ENCODE measurements at regions of chr3 and their contacts with region 1.

Region 1: DNA sequence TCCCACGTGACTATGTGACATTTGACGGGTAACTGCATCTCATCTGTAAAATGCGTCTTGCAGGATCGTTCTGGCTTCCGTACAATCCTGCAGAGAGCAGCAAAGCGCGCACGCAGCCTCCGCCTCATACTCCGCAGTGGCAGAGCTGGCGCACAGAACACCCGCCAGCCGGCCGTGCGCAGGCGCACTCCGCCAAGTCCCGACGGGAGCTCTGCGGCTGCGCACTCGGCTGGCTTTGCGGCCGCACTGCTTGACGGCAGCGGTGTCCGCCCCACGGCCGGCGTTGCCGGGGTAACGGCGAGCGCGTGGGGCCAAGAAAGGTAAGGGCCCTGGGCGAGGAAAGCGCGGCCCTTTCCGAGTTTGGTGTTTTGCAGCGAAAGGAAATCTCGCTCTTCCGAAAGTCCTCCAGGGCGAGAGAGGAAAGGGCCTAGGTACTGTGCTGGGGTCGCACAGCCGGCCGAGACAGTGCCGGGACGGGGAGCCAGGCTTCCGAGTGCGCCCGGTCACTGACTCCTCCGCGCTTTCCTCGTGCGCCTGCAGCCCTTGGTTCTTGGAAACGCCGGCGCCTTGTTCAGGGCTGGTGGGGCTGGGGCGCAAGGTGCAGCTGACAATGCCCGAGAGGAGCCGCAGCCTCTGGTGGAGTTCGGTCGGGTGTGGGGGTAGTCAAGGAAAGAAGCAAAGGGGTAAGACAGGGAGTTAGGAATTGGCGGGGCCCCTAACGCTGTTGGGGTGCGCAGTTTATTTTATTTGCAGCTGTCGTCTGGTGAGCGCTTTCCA is at the start of gene TSEN2:
- DNase-seq: peak; percentile 99
- H3K4me3 Mint-ChIP-seq: peak within 1 kb of the TSS; percentile 94
- H3K27ac Mint-ChIP-seq: peak within 1 kb of the TSS; percentile 97
- H3K4me1 Mint-ChIP-seq: peaks cover 25% of the 10 kb centered on the region
- H3K27me3 Mint-ChIP-seq: no peaks in the 10 kb centered on the region
- total RNA-seq, gene TSEN2: 30.5 and 39.3 TPM in 2 replicates

Region 2: DNA sequence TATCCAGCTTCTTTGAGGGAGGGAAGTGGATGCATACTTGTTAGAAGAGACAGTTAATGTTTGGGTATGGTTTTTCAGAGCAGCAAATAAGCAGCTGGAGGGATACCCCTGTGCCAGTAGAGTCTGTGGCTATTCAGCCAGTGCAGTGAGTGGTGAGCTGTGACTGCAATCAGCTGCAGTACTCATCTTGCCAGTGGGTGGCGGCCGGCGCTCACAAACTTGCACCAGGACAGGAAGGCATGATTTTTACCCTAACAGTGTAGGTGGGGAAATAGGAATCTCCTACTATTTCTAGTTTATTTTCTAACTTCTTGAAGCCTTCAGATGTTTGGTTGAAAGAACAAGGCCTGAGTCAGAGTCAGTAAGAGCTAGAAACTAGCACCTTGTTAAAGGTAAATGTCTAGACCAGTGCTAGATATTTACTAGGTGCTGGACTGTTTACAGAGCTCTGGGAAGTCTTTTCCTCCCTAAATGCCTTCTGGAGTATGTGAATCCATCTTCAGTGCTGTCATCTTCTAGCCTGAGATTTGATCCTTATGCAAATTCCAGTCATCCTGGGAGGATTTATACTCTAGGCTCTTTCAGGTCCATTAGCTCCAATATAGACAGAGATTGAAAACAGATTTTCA is 349.2 kb before region 1 on chr3:
- intact Hi-C with region 1: loop called (anchors 1 kb)
- DNase-seq: peak; percentile 88
- H3K4me3 Mint-ChIP-seq: no peak overlapping the region
- H3K27ac Mint-ChIP-seq: no peak overlapping the region
- H3K4me1 Mint-ChIP-seq: peaks cover 4% of the 10 kb centered on the region
- H3K27me3 Mint-ChIP-seq: peaks cover 21% of the 10 kb centered on the region

Region 3: GRCh38 chr3:12287727-12288191 is 196.6 kb before region 1 on chr3:
- intact Hi-C with region 1: loop called (anchors 5 kb)
- DNase-seq: no peak
- H3K4me3 Mint-ChIP-seq: peak overlapping the region; percentile 72
- H3K27ac Mint-ChIP-seq: no peak overlapping the region
- H3K4me1 Mint-ChIP-seq: peaks cover 3% of the 10 kb centered on the region
- H3K27me3 Mint-ChIP-seq: peaks cover 66% of the 10 kb centered on the region

Region 4: GRCh38 chr3:12556671-12557472 is 72.5 kb after region 1 on chr3 and contains the start of gene MKRN2:
- intact Hi-C with region 1: loop called (anchors 1 kb)
- DNase-seq: peak; percentile 96
- H3K4me3 Mint-ChIP-seq: peak within 1 kb of the TSS; percentile 98
- H3K27ac Mint-ChIP-seq: peak within 1 kb of the TSS; percentile 91
- H3K4me1 Mint-ChIP-seq: peaks cover 44% of the 10 kb centered on the region
- H3K27me3 Mint-ChIP-seq: peaks cover 25% of the 10 kb centered on the region
- total RNA-seq, gene MKRN2: 23.2 and 28.2 TPM in 2 replicates

Measured in activated CD4-positive, alpha-beta T cell treated with anti-CD3 and anti-CD28 coated beads, Interleukin-2, amount 10 ng/mL, durations not matched to agents 24 days and 14 days (primary cell).